Mammary epithelial cell (primary cell): ENCODE measurements at regions of chr11 and their contacts with region 1.

Region 1: DNA sequence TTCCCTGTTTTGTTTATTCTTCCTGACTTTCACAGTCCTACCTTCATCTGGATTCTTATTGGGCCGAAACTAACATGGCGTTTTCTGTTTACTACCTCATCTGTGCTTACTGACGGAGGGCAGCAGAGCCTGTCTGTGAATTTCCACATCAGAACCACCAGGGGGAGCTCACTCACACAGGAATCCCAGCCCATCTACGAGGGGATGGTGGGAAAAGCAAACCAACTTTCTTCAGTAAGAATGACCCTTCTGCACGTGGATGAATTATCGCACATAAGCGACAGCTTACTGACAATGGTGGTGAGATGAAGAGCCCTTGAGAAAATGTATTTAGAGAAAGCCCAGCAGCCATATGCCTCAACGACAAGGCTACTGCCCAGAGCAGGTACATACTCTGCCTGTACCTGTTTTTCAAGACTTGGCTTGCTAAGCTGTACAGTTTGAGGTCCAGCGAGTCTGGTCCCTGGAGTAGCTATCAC is 42.5 kb downstream of the LARGE2 start:
- DNase-seq: peak; percentile 54
- H3K4me3 ChIP-seq: no peak overlapping the region
- H3K27ac ChIP-seq: peak overlapping the region; percentile 39
- H3K4me1 ChIP-seq: peaks cover 7% of the 10 kb centered on the region
- H3K27me3 ChIP-seq: no peaks in the 10 kb centered on the region
- CTCF ChIP-seq: peak; percentile 91 to 95

Region 2: GRCh38 chr11:45872513-45873356 is 92.2 kb before region 1 on chr11:
- CTCF ChIA-PET with region 1: no interaction called
- dilution Hi-C with region 1: no loop called
- in situ Hi-C with region 1: no loop called
- intact Hi-C with region 1: loop called (anchors 1 kb)
- DNase-seq: peak; percentile 64
- H3K4me3 ChIP-seq: no peak overlapping the region
- H3K27ac ChIP-seq: no peak overlapping the region
- H3K4me1 ChIP-seq: peaks cover 6% of the 10 kb centered on the region
- H3K27me3 ChIP-seq: no peaks in the 10 kb centered on the region
- CTCF ChIP-seq: peak; percentile 76 to 78

Region 3: DNA sequence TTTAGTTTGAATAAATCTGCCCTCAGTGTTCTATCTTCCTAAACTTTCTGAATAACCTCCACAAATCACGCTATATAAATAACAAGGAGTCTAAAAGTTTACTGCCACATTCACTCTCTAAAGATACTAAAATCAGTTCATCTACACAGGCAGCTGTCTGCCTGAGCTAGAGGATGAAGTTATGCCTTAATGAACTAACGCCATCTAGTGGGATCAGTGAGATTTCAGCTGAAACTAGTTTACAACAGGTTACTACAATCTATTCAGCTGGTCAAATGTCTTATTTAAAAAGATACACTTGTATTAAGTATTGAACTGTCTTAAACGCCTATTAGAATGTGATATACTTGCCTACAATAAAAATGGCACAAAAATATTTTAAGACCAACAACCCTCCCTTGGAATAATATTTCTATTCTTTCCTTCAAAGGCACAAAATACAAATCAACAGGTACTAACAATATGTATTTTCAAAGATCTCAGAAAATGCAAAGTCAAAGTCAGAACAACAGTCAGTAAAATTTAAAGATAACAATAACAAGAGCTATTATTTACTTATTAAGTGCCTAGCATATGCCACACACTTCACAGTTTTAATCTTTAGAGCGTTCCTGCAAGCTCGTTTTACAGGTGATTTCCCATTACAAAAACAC is 41.6 kb after region 1 on chr11:
- CTCF ChIA-PET with region 1: interaction called, 6 read pairs
- dilution Hi-C with region 1: no loop called
- in situ Hi-C with region 1: no loop called
- intact Hi-C with region 1: loop called (anchors 1 kb)
- DNase-seq: peak; percentile 57
- H3K4me3 ChIP-seq: no peak overlapping the region
- H3K27ac ChIP-seq: no peak overlapping the region
- H3K4me1 ChIP-seq: no peaks in the 10 kb centered on the region
- H3K27me3 ChIP-seq: no peaks in the 10 kb centered on the region
- CTCF ChIP-seq: peak; percentile 72 to 80

Region 4: GRCh38 chr11:46308631-46309419 is 343.9 kb after region 1 on chr11:
- CTCF ChIA-PET with region 1: interaction called, 4 read pairs
- dilution Hi-C with region 1: no loop called
- in situ Hi-C with region 1: no loop called
- intact Hi-C with region 1: loop called (anchors 1 kb)
- DNase-seq: peak; percentile 38
- H3K4me3 ChIP-seq: no peak overlapping the region
- H3K27ac ChIP-seq: no peak overlapping the region
- H3K4me1 ChIP-seq: peaks cover 2% of the 10 kb centered on the region
- H3K27me3 ChIP-seq: no peaks in the 10 kb centered on the region
- CTCF ChIP-seq: peak; percentile 94

Region 5: DNA sequence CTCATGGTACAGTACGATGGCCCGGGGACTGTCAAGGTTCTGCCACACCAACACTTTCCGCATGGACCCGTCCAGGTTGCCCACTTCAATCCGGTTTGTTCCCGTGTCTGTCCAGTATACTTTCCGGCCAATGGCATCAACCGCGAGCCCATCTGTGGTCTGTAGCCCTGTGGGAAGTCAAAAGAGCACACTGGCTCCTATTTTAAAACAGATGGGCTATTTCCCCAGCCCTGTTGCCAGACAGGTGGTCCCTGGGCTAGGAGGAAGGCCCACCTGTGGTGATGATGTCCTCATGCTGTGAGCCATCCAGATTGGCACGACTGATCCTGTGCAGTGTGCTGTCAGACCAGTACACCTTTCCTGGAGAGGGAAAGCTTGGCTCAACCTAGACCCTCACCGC is 911.5 kb after region 1 on chr11:
- CTCF ChIA-PET with region 1: interaction called, 20 read pairs
- dilution Hi-C with region 1: no loop called
- in situ Hi-C with region 1: no loop called
- intact Hi-C with region 1: no loop called
- DNase-seq: no peak
- H3K4me3 ChIP-seq: no peak overlapping the region
- H3K27ac ChIP-seq: no peak overlapping the region
- H3K4me1 ChIP-seq: no peaks in the 10 kb centered on the region
- H3K27me3 ChIP-seq: no peaks in the 10 kb centered on the region
- CTCF ChIP-seq: no peak